CD8-positive, alpha-beta T cell (primary cell): ENCODE measurements at regions of chr11 and their contacts with region 1.

Region 1: GRCh38 chr11:72483412-72484186 is 49.3 kb upstream of the CLPB start:
- DNase-seq: peak in 2 of 9 experiments; percentile 25 to 50
- ATAC-seq: no peak
- H3K4me3 ChIP-seq: no peak overlapping the region
- H3K4me3 Mint-ChIP-seq: no peak overlapping the region
- H3K27ac ChIP-seq: no peak overlapping the region
- H3K27ac Mint-ChIP-seq: no peak overlapping the region
- H3K4me1 ChIP-seq: no peaks in the 10 kb centered on the region
- H3K4me1 Mint-ChIP-seq: peaks cover 11% of the 10 kb centered on the region
- H3K27me3 ChIP-seq: no peaks in the 10 kb centered on the region
- H3K27me3 Mint-ChIP-seq: peaks cover 3% of the 10 kb centered on the region
- CTCF ChIP-seq: no peak

Region 2: GRCh38 chr11:72553706-72554105 is 70.1 kb after region 1 on chr11:
- CTCF ChIA-PET with region 1: interaction called, 4 read pairs
- POLR2A ChIA-PET with region 1: no interaction called
- intact Hi-C with region 1: loop called (anchors 1 to 2 kb)
- DNase-seq: peak in 3 of 9 experiments; percentile 24 to 70 (median 64)
- ATAC-seq: no peak
- H3K4me3 ChIP-seq: no peak overlapping the region
- H3K4me3 Mint-ChIP-seq: no peak overlapping the region
- H3K27ac ChIP-seq: no peak overlapping the region
- H3K27ac Mint-ChIP-seq: no peak overlapping the region
- H3K4me1 ChIP-seq: no peaks in the 10 kb centered on the region
- H3K4me1 Mint-ChIP-seq: peaks cover 9% of the 10 kb centered on the region
- H3K27me3 ChIP-seq: no peaks in the 10 kb centered on the region
- H3K27me3 Mint-ChIP-seq: peaks cover 6% of the 10 kb centered on the region
- CTCF ChIP-seq: no peak

Region 3: DNA sequence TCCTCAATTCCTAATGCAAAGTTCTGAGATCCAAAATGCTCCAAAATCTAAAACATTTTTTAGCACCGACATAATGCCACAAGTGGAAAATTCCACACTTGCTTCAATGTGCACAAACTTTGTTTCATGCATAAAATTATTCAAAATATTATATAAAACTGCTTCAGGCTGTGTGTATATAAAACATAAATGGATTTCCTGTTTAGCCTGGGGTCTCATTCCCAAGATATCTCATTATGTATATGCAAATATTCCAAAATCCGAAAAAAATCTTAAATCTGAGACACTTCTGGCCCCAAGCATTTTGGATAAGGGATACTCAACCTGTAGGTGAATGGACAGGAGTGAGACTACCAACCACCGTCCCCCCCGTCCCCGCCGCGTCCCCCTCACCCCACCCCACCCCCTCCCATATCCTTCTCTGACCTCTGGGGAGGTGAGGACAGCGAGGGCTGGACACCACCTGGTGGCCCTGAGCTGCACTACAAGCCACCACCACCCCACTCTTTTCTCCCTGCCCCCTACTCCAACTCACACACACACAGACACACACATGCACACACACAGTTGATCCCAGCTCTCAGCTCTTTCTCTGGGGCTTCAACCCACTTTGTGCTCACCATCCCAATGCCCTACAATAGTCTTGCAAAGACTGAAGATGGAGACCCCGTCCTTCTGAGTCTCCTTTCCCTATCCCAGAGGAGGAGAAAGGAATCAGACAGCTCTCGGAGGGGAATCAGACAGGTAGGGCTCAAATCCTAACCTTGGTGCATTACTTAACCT is 89.7 kb after region 1 on chr11:
- CTCF ChIA-PET with region 1: interaction called, 7 read pairs
- POLR2A ChIA-PET with region 1: no interaction called
- intact Hi-C with region 1: loop called (anchors 1 kb)
- DNase-seq: peak in 2 of 9 experiments; percentile 55 to 62
- ATAC-seq: peak; percentile 58
- H3K4me3 ChIP-seq: no peak overlapping the region
- H3K4me3 Mint-ChIP-seq: no peak overlapping the region
- H3K27ac ChIP-seq: no peak overlapping the region
- H3K27ac Mint-ChIP-seq: no peak overlapping the region
- H3K4me1 ChIP-seq: no peaks in the 10 kb centered on the region
- H3K4me1 Mint-ChIP-seq: peaks cover 3% of the 10 kb centered on the region
- H3K27me3 ChIP-seq: no peaks in the 10 kb centered on the region
- H3K27me3 Mint-ChIP-seq: peaks cover 24% of the 10 kb centered on the region
- CTCF ChIP-seq: no peak

Region 4: GRCh38 chr11:72642884-72643511 is 159.4 kb after region 1 on chr11:
- CTCF ChIA-PET with region 1: interaction called, 4 read pairs
- POLR2A ChIA-PET with region 1: no interaction called
- intact Hi-C with region 1: loop called in 1 of 2 experiments (anchors 1 kb)
- DNase-seq: peak; percentile 40 to 80 (median 56)
- ATAC-seq: peak; percentile 86
- H3K4me3 ChIP-seq: peak overlapping the region; percentile 51 to 54
- H3K4me3 Mint-ChIP-seq: peak overlapping the region; percentile 77
- H3K27ac ChIP-seq: no peak overlapping the region
- H3K27ac Mint-ChIP-seq: no peak overlapping the region
- H3K4me1 ChIP-seq: peaks cover 3% of the 10 kb centered on the region
- H3K4me1 Mint-ChIP-seq: peaks cover 2% of the 10 kb centered on the region
- H3K27me3 ChIP-seq: peaks cover 8 to 22% of the 10 kb centered on the region in 2 experiments
- H3K27me3 Mint-ChIP-seq: peaks cover 5% of the 10 kb centered on the region
- CTCF ChIP-seq: peak; percentile 95

Region 5: GRCh38 chr11:72683782-72684200 is 200.2 kb after region 1 on chr11:
- CTCF ChIA-PET with region 1: no interaction called
- POLR2A ChIA-PET with region 1: no interaction called
- intact Hi-C with region 1: loop called in 1 of 2 experiments (anchors 1 kb)
- DNase-seq: peak; percentile 48 to 80 (median 66)
- ATAC-seq: peak; percentile 82
- H3K4me3 ChIP-seq: no peak overlapping the region
- H3K4me3 Mint-ChIP-seq: no peak overlapping the region
- H3K27ac ChIP-seq: no peak overlapping the region
- H3K27ac Mint-ChIP-seq: peak overlapping the region; percentile 27
- H3K4me1 ChIP-seq: peaks cover 6% of the 10 kb centered on the region
- H3K4me1 Mint-ChIP-seq: peaks cover 15% of the 10 kb centered on the region
- H3K27me3 ChIP-seq: no peaks in the 10 kb centered on the region
- H3K27me3 Mint-ChIP-seq: no peaks in the 10 kb centered on the region
- CTCF ChIP-seq: peak; percentile 90